ENCODE measurements at regions of chr1 and their contacts with region 1.

Region 1: GRCh38 chr1:1250786-1251284 is 4.3 kb upstream of the C1QTNF12 start:
- DNase-seq: no peak

Region 2: GRCh38 chr1:1122078-1122811 is 128.6 kb before region 1 on chr1:
- intact Hi-C with region 1: loop called (anchors 5 kb)
- DNase-seq: peak; percentile 66 to 97 (median 82)